SK-N-SH (cell line): ENCODE measurements at regions of chr17 and their contacts with region 1.

Region 1: GRCh38 chr17:27293898-27294688 is at the start of gene WSB1:
- DNase-seq: peak; percentile 99
- H3K4me3 ChIP-seq: peak within 1 kb of the TSS; percentile 78 to 87
- H3K27ac ChIP-seq: peak within 1 kb of the TSS; percentile 91 to 99
- H3K4me1 ChIP-seq: peaks cover 5 to 12% of the 10 kb centered on the region in 2 experiments; a peak in 3 of 4 replicates
- H3K27me3 ChIP-seq: no peaks in the 10 kb centered on the region
- CTCF ChIP-seq: peak; percentile 13; the same call in 1 of the 2 replicates
- EP300 ChIP-seq: no peak
- RAD21 ChIP-seq: no peak
- polyA plus RNA-seq, gene WSB1: 204 and 261 TPM in 2 replicates

Region 2: GRCh38 chr17:27257031-27257357 is 37.1 kb before region 1 on chr17:
- CTCF ChIA-PET with region 1: no interaction called
- POLR2A ChIA-PET with region 1: no interaction called
- DNase-seq: no peak
- H3K4me3 ChIP-seq: no peak overlapping the region
- H3K27ac ChIP-seq: no peak overlapping the region
- H3K4me1 ChIP-seq: no peaks in the 10 kb centered on the region; a peak in 1 of 4 replicates
- H3K27me3 ChIP-seq: no peaks in the 10 kb centered on the region
- CTCF ChIP-seq: no peak
- EP300 ChIP-seq: no peak
- RAD21 ChIP-seq: no peak

Region 3: DNA sequence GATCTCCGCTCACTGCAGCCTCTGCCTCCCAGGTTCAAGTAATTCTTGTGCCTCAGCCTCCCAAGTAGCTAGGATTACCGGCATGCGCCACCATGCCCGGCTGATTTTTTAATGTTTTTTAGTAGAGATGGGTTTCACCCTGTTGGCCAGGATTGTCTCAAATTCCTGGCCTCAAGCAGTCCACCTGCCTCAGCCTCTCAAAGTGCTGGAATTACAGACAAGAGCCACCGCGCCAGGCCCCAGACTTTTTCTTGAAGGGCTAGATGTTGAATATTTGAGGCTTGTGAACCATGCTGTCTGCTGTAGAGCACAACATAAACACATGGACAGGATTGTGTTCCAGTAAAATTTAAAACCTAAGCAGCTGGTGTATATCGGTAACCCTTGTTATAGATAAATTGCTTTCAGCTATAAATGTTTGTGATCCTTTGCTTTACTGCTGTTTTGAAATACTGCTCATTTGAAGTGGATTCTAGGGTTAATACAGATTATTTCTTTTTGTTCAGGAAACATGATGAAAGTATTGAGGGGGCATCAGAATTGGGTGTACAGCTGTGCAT is 12.3 kb after region 1 on chr17:
- CTCF ChIA-PET with region 1: interaction called, 19 read pairs
- POLR2A ChIA-PET with region 1: interaction called, 7 read pairs
- DNase-seq: no peak
- H3K4me3 ChIP-seq: no peak overlapping the region
- H3K27ac ChIP-seq: no peak overlapping the region
- H3K4me1 ChIP-seq: peaks cover 0 to 3% of the 10 kb centered on the region in 2 experiments; a peak in 2 of 4 replicates
- H3K27me3 ChIP-seq: no peaks in the 10 kb centered on the region
- CTCF ChIP-seq: no peak
- EP300 ChIP-seq: no peak
- RAD21 ChIP-seq: no peak

Region 4: DNA sequence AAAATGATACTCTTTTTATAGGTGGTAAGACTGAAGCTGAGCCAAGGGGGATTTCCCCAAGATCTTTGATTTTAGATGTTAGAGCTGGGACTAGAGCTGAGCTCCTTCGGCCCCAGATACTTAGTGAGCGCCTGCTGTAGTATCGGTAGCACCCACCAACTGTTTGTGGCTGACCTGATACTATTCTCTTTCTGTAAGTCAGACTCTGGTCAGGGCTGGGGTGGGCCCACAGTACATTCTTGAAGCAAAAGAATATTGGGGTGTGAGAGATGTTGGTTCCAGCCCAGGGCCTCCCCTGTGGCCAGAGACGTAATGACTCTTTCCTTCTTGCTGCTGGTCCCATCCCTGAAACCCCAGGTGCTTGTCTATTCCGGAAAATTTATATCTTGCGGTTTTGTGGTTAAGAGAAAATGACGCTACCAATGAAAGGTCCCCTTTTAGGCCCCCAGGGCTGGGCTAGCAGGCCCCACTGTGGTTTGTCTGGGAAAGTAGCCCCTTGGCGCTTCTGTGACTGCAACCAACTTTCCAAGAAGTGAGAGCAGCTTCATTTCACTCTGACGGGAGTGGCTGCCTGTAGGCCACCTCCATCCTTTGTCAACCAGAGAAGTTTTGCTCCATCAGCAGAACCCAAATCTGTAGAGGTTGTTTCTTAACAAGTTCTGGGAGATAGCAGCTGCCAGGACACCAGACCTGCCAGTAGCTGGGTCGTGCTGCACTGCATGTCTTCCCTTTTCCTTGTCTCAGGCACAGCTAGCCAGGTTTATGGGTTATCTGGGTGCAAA is 250.4 kb after region 1 on chr17:
- CTCF ChIA-PET with region 1: no interaction called
- POLR2A ChIA-PET with region 1: no interaction called
- DNase-seq: no peak
- H3K4me3 ChIP-seq: no peak overlapping the region
- H3K27ac ChIP-seq: no peak overlapping the region
- H3K4me1 ChIP-seq: peaks cover 6 to 13% of the 10 kb centered on the region in 2 experiments; a peak in 3 of 4 replicates
- H3K27me3 ChIP-seq: no peaks in the 10 kb centered on the region
- CTCF ChIP-seq: no peak
- EP300 ChIP-seq: no peak
- RAD21 ChIP-seq: no peak